HEK293 (cell line): ENCODE measurements at regions of chr10 and their contacts with region 1.

Region 1: DNA sequence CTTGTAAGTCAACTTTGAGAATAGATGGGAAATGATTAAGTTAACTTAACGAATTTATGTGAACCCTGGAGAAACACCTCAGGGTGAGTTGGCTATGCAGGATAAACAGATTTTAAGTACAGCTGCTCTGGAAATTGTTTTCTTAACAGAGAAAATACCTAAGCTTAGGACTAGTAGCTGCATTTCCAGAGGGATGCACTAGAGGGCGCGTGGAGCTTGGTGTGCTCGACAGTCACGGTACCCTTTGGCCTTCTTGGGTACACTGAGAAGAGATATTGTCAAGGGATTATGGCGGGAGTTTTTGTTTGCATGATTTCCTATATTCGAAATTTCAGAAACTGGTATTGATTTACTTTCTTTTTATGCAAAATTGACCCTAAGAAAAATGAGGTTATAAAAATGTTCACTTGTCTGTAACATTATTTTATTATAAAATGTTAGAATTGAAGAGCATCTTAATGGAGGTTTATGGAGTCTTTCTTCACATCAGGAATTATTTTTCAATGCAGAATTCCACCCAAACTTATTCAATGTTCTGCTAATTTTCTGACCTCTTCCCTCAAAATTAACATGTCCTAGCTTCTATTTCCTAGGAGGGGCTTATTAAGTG is 58.4 kb upstream of the MYO3A start:
- H3K4me3 ChIP-seq: no peak overlapping the region
- H3K27ac ChIP-seq: no peak overlapping the region
- H3K4me1 ChIP-seq: no peaks in the 10 kb centered on the region
- CTCF ChIP-seq: peak; percentile 29; the same call in 1 of the 2 replicates

Region 2: DNA sequence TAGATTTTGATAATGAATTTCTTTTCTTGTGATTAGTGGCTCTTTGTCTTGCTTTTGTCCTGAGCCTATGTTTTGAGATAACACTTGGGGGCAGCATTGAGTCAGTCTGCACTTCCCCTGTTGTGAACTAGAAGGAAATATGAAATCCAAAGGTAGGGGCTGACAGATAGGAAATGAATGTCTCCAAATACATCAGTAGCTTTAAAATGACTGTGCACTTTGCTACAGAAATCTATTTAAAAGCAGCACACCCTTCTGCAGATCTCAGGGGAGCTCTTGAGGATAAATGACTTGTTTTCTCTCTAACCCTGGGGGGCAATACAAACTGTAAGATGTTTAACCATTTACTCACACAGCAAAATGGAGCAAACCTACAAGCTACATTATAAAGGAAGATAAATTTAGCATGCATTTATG is 117.6 kb before region 1 on chr10:
- CTCF ChIA-PET with region 1: interaction called, 20 read pairs
- POLR2A ChIA-PET with region 1: no interaction called
- H3K4me3 ChIP-seq: no peak overlapping the region
- H3K27ac ChIP-seq: no peak overlapping the region
- H3K4me1 ChIP-seq: no peaks in the 10 kb centered on the region
- CTCF ChIP-seq: peak; percentile 42

Region 3: DNA sequence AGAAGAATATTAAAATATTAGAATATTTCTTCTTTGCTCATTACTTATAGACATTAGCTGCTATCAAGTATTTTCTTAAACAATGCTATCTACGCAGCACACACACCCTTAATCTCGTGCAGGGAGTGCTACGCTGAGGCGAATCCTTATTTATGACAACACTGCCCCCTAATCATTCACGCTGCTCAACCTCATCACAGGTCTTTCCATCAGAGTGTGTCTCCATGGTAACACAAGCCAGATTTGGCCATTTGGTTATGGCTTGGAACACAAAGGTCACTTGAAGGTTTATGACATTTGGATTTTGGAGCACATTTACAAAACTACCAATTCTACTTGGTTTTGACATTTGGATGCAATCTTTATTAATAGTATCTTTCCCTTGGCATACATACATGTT is 13.0 kb after region 1 on chr10:
- CTCF ChIA-PET with region 1: interaction called, 11 read pairs
- POLR2A ChIA-PET with region 1: no interaction called
- H3K4me3 ChIP-seq: no peak overlapping the region
- H3K27ac ChIP-seq: no peak overlapping the region
- H3K4me1 ChIP-seq: no peaks in the 10 kb centered on the region
- CTCF ChIP-seq: no peak

Region 4: DNA sequence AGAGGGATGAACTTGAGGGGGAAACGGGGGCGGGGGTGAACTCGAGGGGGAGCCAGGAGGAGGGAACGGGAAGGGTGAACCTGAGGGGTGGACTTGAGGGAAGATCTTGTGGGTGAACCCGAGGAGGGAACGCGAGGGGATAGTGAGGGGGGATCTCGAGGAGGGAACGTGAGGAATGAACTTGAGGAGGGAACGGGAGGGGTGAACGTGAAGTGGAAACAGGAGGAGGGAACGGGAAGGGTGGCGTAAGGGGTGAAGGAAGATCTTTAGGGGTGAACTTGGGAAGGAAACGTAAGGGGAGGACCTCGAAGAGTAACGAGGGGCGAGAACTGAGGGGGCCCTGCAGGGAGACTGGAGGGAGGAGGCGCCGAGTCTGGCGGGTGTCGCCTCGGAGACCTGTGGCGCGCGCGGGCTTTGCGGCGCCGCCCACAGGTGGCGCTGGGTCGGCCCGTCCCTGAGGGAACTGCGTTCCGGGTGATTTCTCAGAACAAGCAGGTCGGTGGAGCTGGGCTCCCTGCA is 59.0 kb after region 1 on chr10:
- CTCF ChIA-PET with region 1: interaction called, 12 read pairs
- POLR2A ChIA-PET with region 1: no interaction called
- H3K4me3 ChIP-seq: peak overlapping the region; percentile 61
- H3K27ac ChIP-seq: peak overlapping the region; percentile 88
- H3K4me1 ChIP-seq: no peaks in the 10 kb centered on the region
- CTCF ChIP-seq: peak; percentile 89; the same call in 1 of the 2 replicates

Region 5: DNA sequence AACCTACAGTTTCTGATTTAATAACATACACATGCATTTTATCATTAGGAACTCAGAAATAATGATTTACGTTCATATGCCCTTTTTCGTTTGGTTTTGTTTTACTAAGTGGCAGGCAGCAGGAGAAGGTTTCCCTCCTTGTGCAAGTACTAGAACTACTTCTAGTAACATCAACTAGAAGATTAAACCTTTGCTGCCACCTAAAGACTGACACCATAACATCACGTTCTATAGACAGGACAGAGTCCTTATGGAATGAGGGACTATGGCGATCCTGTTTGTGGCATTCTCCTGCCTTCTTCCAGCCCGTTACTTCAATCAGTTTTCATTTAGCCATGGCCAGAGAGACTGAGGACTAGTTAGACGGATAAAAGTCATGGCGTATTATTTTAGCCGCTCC is 394.1 kb after region 1 on chr10:
- CTCF ChIA-PET with region 1: interaction called, 39 read pairs
- POLR2A ChIA-PET with region 1: no interaction called
- H3K4me3 ChIP-seq: no peak overlapping the region
- H3K27ac ChIP-seq: no peak overlapping the region
- H3K4me1 ChIP-seq: no peaks in the 10 kb centered on the region
- CTCF ChIP-seq: peak; percentile 45; the same call in 1 of the 2 replicates